ENCODE measurements at regions of chr11 and their contacts with region 1.

Region 1: GRCh38 chr11:59142530-59143507 is at the start of gene FAM111A:
- DNase-seq: peak; percentile 83
- ATAC-seq: peak; percentile 85
- H3K4me3 ChIP-seq: peak within 1 kb of the TSS; percentile 51 to 79
- H3K27ac ChIP-seq: peak within 1 kb of the TSS; percentile 67
- H3K4me1 ChIP-seq: peaks cover 15 to 34% of the 10 kb centered on the region in 2 experiments
- H3K27me3 ChIP-seq: no peaks in the 10 kb centered on the region
- CTCF ChIP-seq: peak in 2 of 3 experiments; percentile 9 to 21; a peak in 1 of 6 replicates
- POLR2A ChIP-seq: no peak
- RAD21 ChIP-seq: no peak
- total RNA-seq, gene FAM111A: 30.3 TPM

Region 2: DNA sequence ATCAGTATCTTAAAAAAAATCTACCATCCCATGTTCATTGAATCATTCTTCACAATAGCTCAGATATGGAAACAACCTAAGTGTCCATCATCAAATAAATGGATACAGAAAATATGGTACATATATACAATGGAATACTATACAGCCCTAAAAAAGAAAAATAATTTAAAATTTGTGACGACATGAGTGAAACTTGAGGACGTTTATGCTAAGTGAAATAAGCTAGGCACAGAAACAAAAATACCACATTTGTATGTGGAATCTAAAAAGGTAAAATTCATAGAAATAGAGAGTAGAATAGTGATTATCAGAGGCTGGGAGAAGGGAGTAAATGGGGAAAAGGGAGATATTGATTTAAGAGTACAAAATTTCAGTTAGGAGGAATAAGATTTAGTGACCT is 1056.3 kb before region 1 on chr11:
- CTCF ChIA-PET with region 1: no interaction called
- POLR2A ChIA-PET with region 1: no interaction called
- RAD21 ChIA-PET with region 1: no interaction called
- intact Hi-C with region 1: no loop called
- DNase-seq: no peak
- ATAC-seq: no peak
- H3K4me3 ChIP-seq: no peak overlapping the region
- H3K27ac ChIP-seq: no peak overlapping the region
- H3K4me1 ChIP-seq: no peaks in the 10 kb centered on the region
- H3K27me3 ChIP-seq: no peaks in the 10 kb centered on the region; the same call in 1 of the 2 replicates
- CTCF ChIP-seq: no peak
- POLR2A ChIP-seq: no peak
- RAD21 ChIP-seq: no peak

Region 3: GRCh38 chr11:58923300-58923788 is 219.5 kb before region 1 on chr11:
- CTCF ChIA-PET with region 1: no interaction called
- POLR2A ChIA-PET with region 1: no interaction called
- RAD21 ChIA-PET with region 1: no interaction called
- intact Hi-C with region 1: loop called (anchors 10 kb)
- DNase-seq: peak; percentile 54
- ATAC-seq: peak; percentile 94
- H3K4me3 ChIP-seq: peak overlapping the region; percentile 27 to 36; a peak in 3 of 4 replicates
- H3K27ac ChIP-seq: no peak overlapping the region
- H3K4me1 ChIP-seq: peaks cover 12 to 17% of the 10 kb centered on the region in 2 experiments
- H3K27me3 ChIP-seq: no peaks in the 10 kb centered on the region
- CTCF ChIP-seq: peak; percentile 27 to 41 (median 40); a peak in 3 of 6 replicates
- POLR2A ChIP-seq: no peak
- RAD21 ChIP-seq: peak; percentile 54

Region 4: GRCh38 chr11:59164028-59164427 is 21.2 kb after region 1 on chr11:
- CTCF ChIA-PET with region 1: no interaction called
- POLR2A ChIA-PET with region 1: no interaction called
- RAD21 ChIA-PET with region 1: no interaction called
- intact Hi-C with region 1: no loop called
- DNase-seq: no peak
- ATAC-seq: no peak
- H3K4me3 ChIP-seq: no peak overlapping the region
- H3K27ac ChIP-seq: no peak overlapping the region
- H3K4me1 ChIP-seq: no peaks in the 10 kb centered on the region
- H3K27me3 ChIP-seq: no peaks in the 10 kb centered on the region
- CTCF ChIP-seq: no peak
- POLR2A ChIP-seq: no peak
- RAD21 ChIP-seq: no peak